Motor neuron (in vitro differentiated cells): ENCODE measurements at regions of chr19 and their contacts with region 1.

Region 1: GRCh38 chr19:14136509-14137281 is at the start of gene ASF1B:
- ATAC-seq: peak; percentile 85 to 93 (median 90)
- H3K4me3 ChIP-seq: peak within 1 kb of the TSS; percentile 41 to 62 (median 50)
- H3K27ac ChIP-seq: peak within 1 kb of the TSS in 1 of 2 donors; percentile 76
- H3K4me1 ChIP-seq: peaks cover 0 to 16% of the 10 kb centered on the region in 2 donors
- total RNA-seq, gene ASF1B: 0.54 to 21.5 (median 1.2) TPM

Region 2: DNA sequence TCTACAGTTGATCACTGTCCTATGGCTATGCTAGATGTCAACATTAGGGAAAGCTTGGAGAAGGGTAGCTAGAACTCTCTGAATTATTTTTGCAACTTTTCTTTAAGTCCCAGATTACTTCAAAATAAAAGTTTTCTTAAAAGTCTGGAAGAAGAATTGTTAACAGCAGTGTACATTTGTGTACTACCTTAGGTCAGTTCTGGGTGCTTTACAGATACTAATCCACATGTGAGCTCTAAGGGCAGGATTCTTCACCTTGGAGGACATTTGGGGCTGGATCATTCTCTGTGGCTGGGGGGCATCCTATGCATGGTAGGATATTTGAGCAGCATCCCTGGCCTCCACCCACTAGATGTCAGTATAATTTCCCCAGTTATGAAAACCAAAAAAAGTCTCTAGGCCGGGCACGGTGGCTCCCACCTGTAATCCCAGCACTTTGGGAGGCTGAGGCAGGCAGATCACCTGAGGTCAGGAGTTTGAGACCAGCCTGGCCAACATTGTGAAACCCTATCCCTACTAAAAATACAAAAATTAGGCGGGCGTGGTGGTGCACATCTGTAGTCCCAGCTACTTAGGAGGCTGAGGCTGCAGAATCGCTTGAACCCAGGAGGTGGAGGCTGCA is 233.6 kb before region 1 on chr19:
- in situ Hi-C with region 1: no loop called
- ATAC-seq: no peak
- H3K4me3 ChIP-seq: no peak overlapping the region
- H3K27ac ChIP-seq: no peak overlapping the region
- H3K4me1 ChIP-seq: peaks cover 0 to 5% of the 10 kb centered on the region in 2 donors

Region 3: GRCh38 chr19:14347999-14348889 is 211.5 kb after region 1 on chr19:
- in situ Hi-C with region 1: loop called in 1 of 9 experiments (anchors 25 kb)
- ATAC-seq: peak; percentile 46 to 91 (median 76)
- H3K4me3 ChIP-seq: peak overlapping the region in 2 of 5 donors; percentile 4 to 5
- H3K27ac ChIP-seq: no peak overlapping the region
- H3K4me1 ChIP-seq: no peaks in the 10 kb centered on the region

Region 4: GRCh38 chr19:14419106-14419813 is 282.6 kb after region 1 on chr19 and contains the start of gene DDX39A:
- in situ Hi-C with region 1: loop called in 1 of 9 experiments (anchors 25 kb)
- ATAC-seq: peak; percentile 90 to 98 (median 97)
- H3K4me3 ChIP-seq: peak within 1 kb of the TSS; percentile 61 to 83 (median 75)
- H3K27ac ChIP-seq: peak within 1 kb of the TSS; percentile 86 to 95
- H3K4me1 ChIP-seq: peaks cover 10 to 12% of the 10 kb centered on the region in 2 donors
- total RNA-seq, gene DDX39A: 25.7 to 134 (median 58.3) TPM